Activated naive CD4-positive, alpha-beta T cell treated with anti-CD3 and anti-CD28 coated beads for 36 hours (primary cell): ENCODE measurements at regions of chr2 and their contacts with region 1.

Region 1: DNA sequence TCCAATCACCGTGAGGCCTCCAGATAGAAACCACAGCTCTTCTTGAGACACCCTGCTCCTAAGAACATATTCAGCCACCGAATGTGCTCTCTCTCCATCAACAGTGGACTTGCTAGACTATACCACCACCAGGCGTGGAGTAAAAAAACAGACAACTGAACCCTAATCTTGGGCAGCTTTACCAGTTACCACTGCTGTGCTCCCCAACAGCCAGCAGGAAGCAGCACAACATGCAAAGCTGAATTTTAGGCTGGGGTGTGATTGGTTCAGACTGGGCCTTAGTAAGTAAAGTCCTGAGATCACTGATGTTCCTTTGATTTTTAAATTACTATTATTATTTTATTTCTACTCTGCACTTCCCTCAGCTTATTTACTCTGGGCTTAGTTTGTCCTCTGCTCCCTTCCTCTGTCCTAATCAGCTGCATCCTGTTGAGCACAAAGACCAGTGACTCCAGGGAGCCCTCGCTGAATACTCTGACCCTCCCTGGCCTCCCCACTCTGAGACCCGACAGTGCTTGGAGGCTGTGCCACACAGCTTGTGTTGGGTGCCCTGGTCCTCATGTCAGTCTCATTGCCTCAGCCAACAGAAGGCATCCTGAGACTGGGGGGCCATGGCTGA is 21.9 kb downstream of the MRPL35 start:
- DNase-seq: peak; percentile 80
- H3K4me3 Mint-ChIP-seq: no peak overlapping the region
- H3K27ac Mint-ChIP-seq: no peak overlapping the region
- H3K4me1 Mint-ChIP-seq: peaks cover 16% of the 10 kb centered on the region
- H3K27me3 Mint-ChIP-seq: no peaks in the 10 kb centered on the region

Region 2: GRCh38 chr2:86297382-86298147 is 76.4 kb after region 1 on chr2:
- CTCF ChIA-PET with region 1: interaction called, 7 read pairs
- intact Hi-C with region 1: loop called (anchors 1 kb)
- DNase-seq: peak; percentile 46
- H3K4me3 Mint-ChIP-seq: no peak overlapping the region
- H3K27ac Mint-ChIP-seq: no peak overlapping the region
- H3K4me1 Mint-ChIP-seq: no peaks in the 10 kb centered on the region
- H3K27me3 Mint-ChIP-seq: peaks cover 4% of the 10 kb centered on the region

Region 3: GRCh38 chr2:86368161-86368824 is 147.1 kb after region 1 on chr2:
- CTCF ChIA-PET with region 1: interaction called, 44 read pairs
- intact Hi-C with region 1: loop called (anchors 1 kb)
- DNase-seq: peak; percentile 46
- H3K4me3 Mint-ChIP-seq: peak overlapping the region; percentile 66
- H3K27ac Mint-ChIP-seq: peak overlapping the region; percentile 64
- H3K4me1 Mint-ChIP-seq: peaks cover 48% of the 10 kb centered on the region
- H3K27me3 Mint-ChIP-seq: no peaks in the 10 kb centered on the region

Region 4: GRCh38 chr2:86570059-86570458 is 348.9 kb after region 1 on chr2:
- CTCF ChIA-PET with region 1: no interaction called
- intact Hi-C with region 1: no loop called
- DNase-seq: no peak
- H3K4me3 Mint-ChIP-seq: no peak overlapping the region
- H3K27ac Mint-ChIP-seq: no peak overlapping the region
- H3K4me1 Mint-ChIP-seq: no peaks in the 10 kb centered on the region
- H3K27me3 Mint-ChIP-seq: no peaks in the 10 kb centered on the region

Region 5: DNA sequence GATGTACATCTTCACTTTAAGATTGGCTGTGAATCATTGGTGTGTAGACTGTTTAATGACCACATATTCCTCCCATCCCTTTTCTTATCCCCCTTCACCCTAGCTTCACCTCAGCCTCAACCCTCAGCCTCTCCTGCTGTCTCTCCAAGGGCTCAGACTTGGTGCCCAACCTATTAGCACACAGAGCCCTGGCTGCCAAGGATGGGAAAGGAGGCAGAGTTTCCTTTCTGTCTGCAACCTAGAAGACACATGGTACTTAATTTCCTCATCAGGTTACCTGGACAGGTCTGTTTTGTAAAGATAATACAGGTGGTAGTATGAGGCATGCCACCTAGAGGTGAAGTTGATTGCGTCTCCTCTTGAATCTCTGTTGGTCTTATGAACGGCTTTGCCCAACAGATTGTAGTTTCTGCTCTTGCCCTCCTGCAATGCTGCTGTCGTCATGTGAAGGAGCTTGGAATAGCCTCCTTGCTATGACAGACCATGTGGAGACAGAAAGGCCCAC is 454.4 kb after region 1 on chr2:
- CTCF ChIA-PET with region 1: no interaction called
- intact Hi-C with region 1: loop called (anchors 2 kb)
- DNase-seq: no peak
- H3K4me3 Mint-ChIP-seq: no peak overlapping the region
- H3K27ac Mint-ChIP-seq: no peak overlapping the region
- H3K4me1 Mint-ChIP-seq: no peaks in the 10 kb centered on the region
- H3K27me3 Mint-ChIP-seq: no peaks in the 10 kb centered on the region